ENCODE measurements at regions of chr2 and their contacts with region 1.

Region 1: DNA sequence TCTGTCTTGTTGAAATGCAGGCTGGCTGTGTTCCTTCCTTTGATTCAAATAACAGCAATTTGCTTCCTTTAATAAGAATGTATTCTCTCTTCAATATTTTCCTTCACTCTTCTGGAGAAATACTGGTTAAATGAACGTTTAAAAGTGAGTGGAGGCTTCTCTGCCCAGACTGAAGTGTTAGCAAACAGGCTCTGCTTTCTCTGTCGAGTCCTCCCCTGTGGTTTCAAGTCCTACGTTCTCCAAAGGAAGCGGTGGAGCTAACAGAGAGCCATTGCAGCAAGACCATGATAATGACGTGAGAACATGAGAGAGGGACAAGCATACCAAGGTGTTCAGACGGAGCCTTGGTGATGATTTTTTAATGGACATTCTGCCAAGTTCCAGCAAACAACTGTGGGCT is 26.2 kb upstream of the PID1 start:
- DNase-seq: no peak
- ATAC-seq: peak in 3 of 4 donors; percentile 51 to 71 (median 60)
- H3K4me3 ChIP-seq: no peak overlapping the region
- H3K27ac ChIP-seq: peak overlapping the region in 6 of 12 donors; percentile 4 to 80 (median 34)
- H3K4me1 ChIP-seq: peaks cover 0 to 41% (median 0%) of the 10 kb centered on the region in 12 donors
- H3K27me3 ChIP-seq: no peaks in the 10 kb centered on the region
- CTCF ChIP-seq: no peak
- POLR2A ChIP-seq: no peak

Region 2: DNA sequence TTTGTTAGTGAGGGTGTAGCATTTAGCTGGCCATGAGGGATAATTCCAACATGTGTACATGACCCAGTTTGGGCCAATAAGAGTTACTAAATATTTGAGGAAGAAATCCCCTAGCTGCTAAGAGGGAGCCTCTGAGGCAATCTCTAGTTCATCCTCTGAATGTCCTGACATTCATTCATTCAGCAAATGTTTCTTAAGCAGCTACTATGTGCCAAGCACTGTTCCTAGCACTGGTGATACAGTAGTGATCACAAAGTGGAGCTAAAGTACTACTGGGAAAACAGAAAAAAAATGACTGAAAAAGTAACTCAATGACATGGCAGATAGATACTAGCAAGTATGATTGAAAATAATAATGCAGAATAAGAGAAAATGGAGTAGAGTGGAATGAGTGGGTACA is 53.6 kb after region 1 on chr2:
- intact Hi-C with region 1: loop called in 1 of 10 experiments (anchors 2 kb)
- DNase-seq: no peak
- ATAC-seq: no peak
- H3K4me3 ChIP-seq: no peak overlapping the region
- H3K27ac ChIP-seq: no peak overlapping the region
- H3K4me1 ChIP-seq: no peaks in the 10 kb centered on the region
- H3K27me3 ChIP-seq: no peaks in the 10 kb centered on the region
- CTCF ChIP-seq: peak in 1 of 12 donors; percentile 16
- POLR2A ChIP-seq: no peak

Measured in heart left ventricle (tissue), 16 donors.